AG04450 (cell line): ENCODE measurements at regions of chr5 and their contacts with region 1.

Region 1: DNA sequence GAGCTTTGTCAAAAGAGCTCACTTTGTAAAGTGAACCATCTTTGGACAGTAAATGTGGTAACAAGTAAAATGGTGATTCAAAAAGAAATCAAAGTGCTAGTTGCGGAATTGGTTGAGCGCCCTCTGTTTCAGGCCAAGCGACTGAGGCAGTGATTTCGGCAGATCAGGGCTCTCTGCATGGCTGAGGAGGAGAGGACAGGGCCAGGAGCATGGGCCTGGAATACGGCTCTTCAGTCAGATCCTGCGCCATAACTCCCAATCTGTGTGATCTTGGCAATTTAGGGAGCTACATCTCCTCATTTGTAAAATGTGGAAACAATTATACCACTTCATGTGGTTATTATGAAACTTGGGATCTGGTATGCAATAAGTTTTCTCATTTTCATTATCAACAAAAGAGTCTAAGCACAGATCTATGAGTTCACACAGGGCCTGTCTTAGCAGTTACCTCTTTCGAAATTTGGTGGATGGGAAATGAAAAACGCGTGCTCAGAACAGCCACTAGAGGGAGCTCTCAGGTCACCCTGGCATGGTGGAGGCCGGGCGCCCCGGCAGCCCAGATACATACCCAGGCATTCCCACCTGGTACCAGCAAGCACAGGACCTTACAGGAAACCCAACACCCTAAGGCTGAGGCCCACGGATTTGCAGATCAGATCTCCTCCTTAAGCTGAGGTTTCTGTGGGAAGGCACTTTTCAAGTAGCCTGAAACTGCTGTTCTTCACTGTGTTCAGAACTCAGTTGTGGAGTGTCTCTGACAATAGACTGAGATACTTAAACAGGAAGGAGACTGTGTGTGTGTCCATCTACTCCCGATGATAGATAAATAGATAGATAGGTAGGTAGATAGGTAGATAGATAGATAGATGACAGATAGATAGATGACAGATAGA is 303.7 kb downstream of the RAB3C start:
- DNase-seq: peak; percentile 37
- H3K4me3 ChIP-seq: no peak overlapping the region
- H3K27ac ChIP-seq: no peak overlapping the region
- H3K27me3 ChIP-seq: no peaks in the 10 kb centered on the region
- CTCF ChIP-seq: peak; percentile 93

Region 2: DNA sequence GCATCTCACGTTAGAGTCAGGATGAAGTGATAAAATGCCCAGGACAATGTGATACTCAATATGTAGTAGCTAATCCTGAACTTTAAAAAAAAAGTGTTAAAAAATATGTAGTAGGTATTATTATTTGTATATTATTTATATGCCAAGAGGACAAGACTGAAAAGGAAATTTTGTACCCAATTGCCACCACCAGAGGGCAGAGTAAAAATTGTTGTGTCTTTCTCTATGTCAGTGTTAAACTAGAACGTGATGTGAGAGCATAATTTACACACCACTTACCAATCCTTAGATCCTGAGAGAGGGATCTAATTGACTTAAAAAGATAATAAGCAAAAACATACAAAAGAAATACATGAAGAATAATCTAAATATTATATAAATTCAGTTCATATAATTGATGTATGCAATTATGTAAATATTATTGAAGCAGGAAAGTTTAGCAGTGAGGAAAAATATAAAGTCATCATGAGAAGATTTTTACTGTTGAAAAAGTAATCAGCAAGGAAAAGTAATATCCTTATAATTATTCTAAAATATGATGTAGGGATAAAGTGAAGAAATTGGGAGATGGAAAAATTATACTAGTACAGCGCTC is 14.8 kb before region 1 on chr5:
- CTCF ChIA-PET with region 1: interaction called, 69 read pairs
- POLR2A ChIA-PET with region 1: no interaction called
- DNase-seq: no peak
- H3K4me3 ChIP-seq: no peak overlapping the region
- H3K27ac ChIP-seq: no peak overlapping the region
- H3K27me3 ChIP-seq: peaks cover 6% of the 10 kb centered on the region
- CTCF ChIP-seq: peak; percentile 72

Region 3: GRCh38 chr5:58965677-58966414 is 79.3 kb after region 1 on chr5:
- CTCF ChIA-PET with region 1: interaction called, 13 read pairs
- POLR2A ChIA-PET with region 1: no interaction called
- DNase-seq: no peak
- H3K4me3 ChIP-seq: no peak overlapping the region
- H3K27ac ChIP-seq: no peak overlapping the region
- H3K27me3 ChIP-seq: no peaks in the 10 kb centered on the region
- CTCF ChIP-seq: no peak

Region 4: GRCh38 chr5:58988938-58989337 is 102.4 kb after region 1 on chr5:
- CTCF ChIA-PET with region 1: interaction called, 15 read pairs
- POLR2A ChIA-PET with region 1: no interaction called
- DNase-seq: no peak
- H3K4me3 ChIP-seq: no peak overlapping the region
- H3K27ac ChIP-seq: no peak overlapping the region
- H3K27me3 ChIP-seq: no peaks in the 10 kb centered on the region
- CTCF ChIP-seq: no peak

Region 5: GRCh38 chr5:59039296-59040023 is 152.9 kb after region 1 on chr5:
- CTCF ChIA-PET with region 1: interaction called, 28 read pairs
- POLR2A ChIA-PET with region 1: no interaction called
- DNase-seq: no peak
- H3K4me3 ChIP-seq: peak overlapping the region; percentile 92
- H3K27ac ChIP-seq: peak overlapping the region; percentile 74
- H3K27me3 ChIP-seq: no peaks in the 10 kb centered on the region
- CTCF ChIP-seq: no peak

Region 6: GRCh38 chr5:59367791-59368394 is 481.3 kb after region 1 on chr5:
- CTCF ChIA-PET with region 1: interaction called, 18 read pairs
- POLR2A ChIA-PET with region 1: no interaction called
- DNase-seq: peak; percentile 36
- H3K4me3 ChIP-seq: no peak overlapping the region
- H3K27ac ChIP-seq: no peak overlapping the region
- H3K27me3 ChIP-seq: no peaks in the 10 kb centered on the region
- CTCF ChIP-seq: peak; percentile 88